CD4-positive, alpha-beta T cell (primary cell): ENCODE measurements at regions of chr11 and their contacts with region 1.

Region 1: GRCh38 chr11:11848891-11849746 is 7.3 kb downstream of the USP47 start:
- DNase-seq: peak; percentile 42 to 88 (median 50)
- ATAC-seq: peak; percentile 95
- H3K4me3 ChIP-seq: no peak overlapping the region
- H3K4me3 Mint-ChIP-seq: peak overlapping the region; percentile 45
- H3K27ac ChIP-seq: no peak overlapping the region
- H3K27ac Mint-ChIP-seq: peak overlapping the region; percentile 40
- H3K4me1 ChIP-seq: peaks cover 25% of the 10 kb centered on the region
- H3K4me1 Mint-ChIP-seq: peaks cover 48% of the 10 kb centered on the region
- H3K27me3 ChIP-seq: no peaks in the 10 kb centered on the region
- H3K27me3 Mint-ChIP-seq: no peaks in the 10 kb centered on the region
- CTCF ChIP-seq: peak; percentile 67

Region 2: DNA sequence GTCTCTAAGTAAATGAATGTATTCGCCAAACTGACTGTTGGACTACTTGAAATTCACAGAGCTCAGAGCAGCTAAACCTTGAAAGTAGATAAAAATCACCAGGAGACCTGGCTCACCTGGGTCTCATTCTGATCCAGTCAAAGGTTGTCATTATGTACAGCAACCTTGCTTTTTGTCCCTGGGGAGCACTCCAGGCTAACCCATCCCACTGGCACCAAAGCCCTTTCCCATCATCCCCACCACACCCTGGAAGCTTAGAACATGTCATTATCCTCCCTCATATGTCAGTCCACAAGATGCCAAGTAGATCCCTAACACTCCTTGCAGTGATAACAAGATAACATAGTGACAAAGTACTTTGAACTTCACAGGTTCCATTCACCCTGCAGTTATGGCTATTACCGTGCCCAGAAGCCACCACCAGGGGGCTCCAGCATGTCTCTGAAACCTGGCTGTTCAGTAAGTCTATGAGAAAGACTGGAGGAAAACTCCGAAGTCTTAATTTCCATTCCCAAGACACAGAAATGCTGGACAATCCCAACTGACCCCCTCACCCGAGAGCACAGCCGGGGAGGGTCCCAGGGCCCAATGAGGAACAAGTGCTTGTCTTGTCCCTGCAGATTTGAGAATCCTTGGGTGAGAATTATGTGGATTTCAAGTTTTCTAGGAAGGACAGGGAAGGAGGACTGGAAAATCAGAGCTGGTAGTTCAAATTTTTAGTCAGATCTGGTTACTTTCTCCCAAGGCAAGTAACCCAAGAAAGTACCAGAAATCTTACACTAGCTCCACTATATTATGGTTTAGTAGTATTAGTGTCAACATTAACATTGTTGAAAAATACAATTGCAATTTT is 50.3 kb before region 1 on chr11:
- CTCF ChIA-PET with region 1: interaction called, 24 read pairs
- POLR2A ChIA-PET with region 1: no interaction called
- intact Hi-C with region 1: loop called (anchors 1 kb)
- DNase-seq: peak; percentile 58 to 92 (median 76)
- ATAC-seq: peak; percentile 91
- H3K4me3 ChIP-seq: no peak overlapping the region
- H3K4me3 Mint-ChIP-seq: no peak overlapping the region
- H3K27ac ChIP-seq: no peak overlapping the region
- H3K27ac Mint-ChIP-seq: no peak overlapping the region
- H3K4me1 ChIP-seq: peaks cover 4% of the 10 kb centered on the region
- H3K4me1 Mint-ChIP-seq: no peaks in the 10 kb centered on the region
- H3K27me3 ChIP-seq: peaks cover 4 to 5% of the 10 kb centered on the region in 2 experiments
- H3K27me3 Mint-ChIP-seq: peaks cover 32% of the 10 kb centered on the region
- CTCF ChIP-seq: peak; percentile 94

Region 3: DNA sequence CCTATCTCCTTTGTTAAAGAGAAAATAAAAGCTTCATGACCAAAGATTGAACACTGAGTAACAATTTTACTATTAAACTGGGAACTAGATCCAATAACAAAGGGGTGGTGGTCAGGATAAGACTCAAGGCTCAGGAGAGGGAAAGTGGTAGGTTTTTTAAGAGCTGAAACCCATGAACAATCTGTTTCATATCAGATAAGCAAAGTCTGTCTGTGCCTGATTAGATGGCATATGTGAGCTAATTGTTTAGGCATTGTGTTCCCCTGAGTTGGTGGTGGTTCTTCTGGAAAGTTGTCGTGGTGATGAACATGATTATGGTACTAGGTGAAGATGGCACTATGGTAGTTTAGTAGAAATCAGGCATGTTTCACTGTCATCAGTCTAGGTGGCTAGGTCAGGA is 17.1 kb after region 1 on chr11:
- CTCF ChIA-PET with region 1: interaction called, 14 read pairs
- POLR2A ChIA-PET with region 1: interaction called, 26 read pairs
- intact Hi-C with region 1: loop called in 1 of 2 experiments (anchors 2 kb)
- DNase-seq: no peak
- ATAC-seq: no peak
- H3K4me3 ChIP-seq: no peak overlapping the region
- H3K4me3 Mint-ChIP-seq: peak overlapping the region; percentile 8
- H3K27ac ChIP-seq: no peak overlapping the region
- H3K27ac Mint-ChIP-seq: no peak overlapping the region
- H3K4me1 ChIP-seq: peaks cover 11% of the 10 kb centered on the region
- H3K4me1 Mint-ChIP-seq: peaks cover 72% of the 10 kb centered on the region
- H3K27me3 ChIP-seq: no peaks in the 10 kb centered on the region
- H3K27me3 Mint-ChIP-seq: no peaks in the 10 kb centered on the region
- CTCF ChIP-seq: no peak

Region 4: DNA sequence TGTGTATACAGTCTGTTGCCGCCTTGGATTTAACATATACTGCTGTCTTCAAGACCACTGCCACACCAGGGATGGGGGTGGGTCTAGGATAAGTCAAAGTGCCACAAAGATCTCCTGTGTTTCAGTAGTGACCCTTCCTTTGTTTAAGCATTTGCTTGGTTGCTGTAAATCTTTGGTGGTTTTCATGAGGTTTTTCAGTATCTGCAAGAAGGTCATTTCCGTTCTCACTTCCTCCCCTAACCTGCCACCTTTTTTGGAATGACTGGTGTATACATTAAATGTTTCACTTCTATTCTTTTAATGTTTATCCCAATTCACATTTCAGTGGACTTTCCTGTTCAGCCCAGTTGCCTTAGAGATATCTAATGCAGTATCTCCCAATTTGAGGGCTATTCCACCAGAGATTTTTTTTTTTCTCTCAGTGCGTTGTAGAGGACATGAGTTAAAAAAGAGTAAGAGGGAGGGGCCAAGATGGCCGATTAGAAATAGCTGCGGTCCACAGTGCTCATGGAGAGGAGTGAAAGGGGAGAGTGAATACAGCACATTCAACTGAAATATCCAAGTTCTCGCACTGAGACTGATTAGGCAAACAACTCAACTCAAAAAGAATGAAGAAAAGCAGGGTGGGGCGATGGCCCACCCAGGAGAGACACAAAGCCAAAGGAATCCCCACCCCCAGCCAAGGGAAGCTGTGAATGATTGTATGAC is 35.8 kb after region 1 on chr11:
- CTCF ChIA-PET with region 1: interaction called, 6 read pairs
- POLR2A ChIA-PET with region 1: no interaction called
- intact Hi-C with region 1: loop called in 1 of 2 experiments (anchors 5 kb)
- DNase-seq: peak in 1 of 14 experiments; percentile 43
- ATAC-seq: no peak
- H3K4me3 ChIP-seq: no peak overlapping the region
- H3K4me3 Mint-ChIP-seq: no peak overlapping the region
- H3K27ac ChIP-seq: no peak overlapping the region
- H3K27ac Mint-ChIP-seq: no peak overlapping the region
- H3K4me1 ChIP-seq: peaks cover 5% of the 10 kb centered on the region
- H3K4me1 Mint-ChIP-seq: peaks cover 76% of the 10 kb centered on the region
- H3K27me3 ChIP-seq: no peaks in the 10 kb centered on the region
- H3K27me3 Mint-ChIP-seq: no peaks in the 10 kb centered on the region
- CTCF ChIP-seq: no peak